ENCODE measurements at regions of chr2 and their contacts with region 1.

Region 1: GRCh38 chr2:36461039-36461681 is 105.6 kb downstream of the CRIM1 start:
- DNase-seq: no peak
- H3K4me3 ChIP-seq: peak overlapping the region in 1 of 4 experiments; percentile 17; a peak in 1 of 8 replicates
- H3K27ac ChIP-seq: peak overlapping the region; percentile 74
- H3K4me1 ChIP-seq: peaks cover 11 to 44% (median 34%) of the 10 kb centered on the region in 4 experiments
- H3K27me3 ChIP-seq: no peaks in the 10 kb centered on the region
- CTCF ChIP-seq: no peak
- EP300 ChIP-seq: 0 out of 3 replicates have a peak, but pooled peaks of 1 of the 2 experiments have one; percentile 27
- POLR2A ChIP-seq: peak in 1 of 2 experiments; percentile 54; a peak in 1 of 3 replicates
- RAD21 ChIP-seq: no peak

Region 2: GRCh38 chr2:36367895-36368353 is 93.2 kb before region 1 on chr2:
- CTCF ChIA-PET with region 1: interaction called, 10 read pairs
- POLR2A ChIA-PET with region 1: interaction called, 3 read pairs
- DNase-seq: no peak
- H3K4me3 ChIP-seq: peak overlapping the region in 1 of 4 experiments; percentile 11; a peak in 1 of 8 replicates
- H3K27ac ChIP-seq: peak overlapping the region; percentile 41; the same call in 1 of the 2 replicates
- H3K4me1 ChIP-seq: peaks cover 14 to 48% (median 45%) of the 10 kb centered on the region in 4 experiments
- H3K27me3 ChIP-seq: no peaks in the 10 kb centered on the region
- CTCF ChIP-seq: peak in 1 of 3 experiments; percentile 1; a peak in 1 of 4 replicates
- EP300 ChIP-seq: no peak
- POLR2A ChIP-seq: no peak; a peak in 1 of 3 replicates
- RAD21 ChIP-seq: no peak

Region 3: GRCh38 chr2:36413218-36413617 is 47.9 kb before region 1 on chr2:
- CTCF ChIA-PET with region 1: interaction called, 15 read pairs
- POLR2A ChIA-PET with region 1: interaction called, 6 read pairs
- DNase-seq: no peak
- H3K4me3 ChIP-seq: no peak overlapping the region
- H3K27ac ChIP-seq: no peak overlapping the region
- H3K4me1 ChIP-seq: peaks cover 4 to 17% (median 8%) of the 10 kb centered on the region in 4 experiments; a peak in 6 of 7 replicates
- H3K27me3 ChIP-seq: no peaks in the 10 kb centered on the region
- CTCF ChIP-seq: no peak
- EP300 ChIP-seq: no peak
- POLR2A ChIP-seq: no peak
- RAD21 ChIP-seq: no peak

Region 4: GRCh38 chr2:36444216-36444936 is 16.8 kb before region 1 on chr2:
- CTCF ChIA-PET with region 1: interaction called, 26 read pairs
- POLR2A ChIA-PET with region 1: interaction called, 3 read pairs
- DNase-seq: no peak
- H3K4me3 ChIP-seq: no peak overlapping the region
- H3K27ac ChIP-seq: no peak overlapping the region
- H3K4me1 ChIP-seq: no peaks in the 10 kb centered on the region
- H3K27me3 ChIP-seq: no peaks in the 10 kb centered on the region
- CTCF ChIP-seq: no peak
- EP300 ChIP-seq: no peak
- POLR2A ChIP-seq: no peak
- RAD21 ChIP-seq: no peak

Region 5: DNA sequence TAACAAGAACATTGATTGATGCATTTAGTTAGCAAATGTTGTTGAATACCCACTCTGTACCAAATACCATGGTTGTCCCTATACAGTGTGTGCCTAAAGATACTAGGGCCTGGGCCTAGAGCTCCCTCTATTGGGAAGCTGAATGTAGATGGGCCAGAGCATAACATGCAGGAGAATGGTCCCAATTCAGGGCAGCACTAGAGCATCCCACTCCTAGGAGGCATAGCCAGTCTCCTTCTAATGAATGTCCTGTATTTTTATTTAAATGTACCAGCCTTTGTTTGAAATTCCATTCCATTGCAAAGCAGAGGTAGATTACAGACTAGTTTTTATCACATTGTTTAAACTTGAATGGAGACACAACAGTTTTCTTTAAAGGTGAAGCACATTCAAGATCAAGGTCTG is 46.2 kb after region 1 on chr2:
- CTCF ChIA-PET with region 1: interaction called, 11 read pairs
- POLR2A ChIA-PET with region 1: no interaction called
- DNase-seq: peak in 1 of 2 experiments; percentile 70
- H3K4me3 ChIP-seq: no peak overlapping the region
- H3K27ac ChIP-seq: no peak overlapping the region
- H3K4me1 ChIP-seq: peaks cover 0 to 4% (median 0%) of the 10 kb centered on the region in 4 experiments; a peak in 1 of 7 replicates
- H3K27me3 ChIP-seq: no peaks in the 10 kb centered on the region
- CTCF ChIP-seq: peak; percentile 47 to 94 (median 81)
- EP300 ChIP-seq: no peak
- POLR2A ChIP-seq: no peak
- RAD21 ChIP-seq: peak; percentile 93 to 94

Region 6: GRCh38 chr2:36682562-36682961 is 221.4 kb after region 1 on chr2:
- CTCF ChIA-PET with region 1: no interaction called
- POLR2A ChIA-PET with region 1: no interaction called
- DNase-seq: no peak
- H3K4me3 ChIP-seq: no peak overlapping the region
- H3K27ac ChIP-seq: no peak overlapping the region
- H3K4me1 ChIP-seq: no peaks in the 10 kb centered on the region
- H3K27me3 ChIP-seq: no peaks in the 10 kb centered on the region
- CTCF ChIP-seq: no peak
- EP300 ChIP-seq: no peak
- POLR2A ChIP-seq: no peak
- RAD21 ChIP-seq: no peak

Region 7: GRCh38 chr2:37402636-37403035 is 941.5 kb after region 1 on chr2:
- CTCF ChIA-PET with region 1: no interaction called
- POLR2A ChIA-PET with region 1: no interaction called
- DNase-seq: no peak
- H3K4me3 ChIP-seq: no peak overlapping the region
- H3K27ac ChIP-seq: no peak overlapping the region
- H3K4me1 ChIP-seq: no peaks in the 10 kb centered on the region
- H3K27me3 ChIP-seq: no peaks in the 10 kb centered on the region
- CTCF ChIP-seq: no peak
- EP300 ChIP-seq: no peak
- POLR2A ChIP-seq: no peak
- RAD21 ChIP-seq: no peak

Measured in H1 (cell line).